ENCODE measurements at regions of chr3 and their contacts with region 1.

Region 1: DNA sequence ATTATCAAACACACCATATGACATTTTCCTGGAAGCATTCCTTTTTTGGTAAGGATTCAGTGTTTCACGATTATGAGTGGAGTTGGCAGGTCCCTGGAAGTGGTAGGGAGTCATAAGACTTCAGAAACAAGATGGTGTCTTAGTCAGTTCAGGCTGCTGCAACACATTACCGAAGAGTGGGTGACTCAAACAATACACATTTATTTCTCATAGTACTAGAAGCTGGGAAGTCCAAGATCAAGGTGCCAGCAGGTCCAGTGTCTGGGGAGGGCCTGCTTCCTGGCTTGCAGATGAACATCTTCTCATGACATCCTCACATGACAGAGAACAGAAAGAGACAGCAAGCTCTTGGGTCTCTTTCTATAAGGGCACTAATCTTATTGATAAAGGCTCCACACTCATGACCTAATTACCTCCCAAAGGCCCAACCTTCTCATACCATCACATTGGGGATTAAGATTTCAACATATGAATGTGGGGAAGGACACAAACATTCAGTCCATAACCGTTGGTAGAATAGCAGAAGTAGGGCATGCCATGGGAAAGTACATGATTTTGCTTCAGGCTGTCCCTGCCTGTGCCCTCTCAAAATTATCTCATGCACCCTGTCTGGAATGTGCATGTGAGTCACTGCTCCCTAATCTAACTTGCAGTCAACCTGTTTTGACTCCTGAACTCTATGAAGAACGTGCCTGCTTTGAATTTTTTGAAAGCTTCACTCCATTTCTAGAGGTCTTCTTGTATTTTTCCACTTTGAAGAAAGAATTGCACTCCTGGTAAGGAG is 72.5 kb downstream of the GTPBP8 start:
- DNase-seq: no peak
- H3K4me3 ChIP-seq: no peak overlapping the region
- H3K27ac ChIP-seq: peak overlapping the region in 1 of 2 donors; percentile 17
- H3K4me1 ChIP-seq: peaks cover 2% of the 10 kb centered on the region
- H3K27me3 ChIP-seq: no peaks in the 10 kb centered on the region
- CTCF ChIP-seq: no peak
- EP300 ChIP-seq: no peak
- POLR2A ChIP-seq: no peak

Region 2: DNA sequence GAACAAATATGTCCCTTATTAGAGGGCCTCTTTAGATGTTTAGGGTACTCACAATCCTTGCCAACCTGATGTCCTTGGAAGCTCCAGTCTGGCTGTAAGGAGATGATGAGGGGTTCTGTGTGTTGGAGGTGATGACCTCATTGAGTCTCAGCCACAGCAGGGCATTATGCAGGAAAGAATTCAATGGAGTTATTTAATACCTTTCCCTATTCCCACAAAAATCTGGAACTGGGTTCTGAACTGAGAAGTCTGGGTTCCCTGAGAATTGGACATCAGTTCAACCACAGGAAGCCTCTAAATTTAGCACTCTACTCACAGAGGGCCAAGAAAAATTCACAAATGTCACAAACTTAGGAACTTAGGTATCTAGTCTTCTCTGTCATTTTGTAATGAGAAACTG is 464.6 kb before region 1 on chr3:
- intact Hi-C with region 1: no loop called
- DNase-seq: no peak
- H3K4me3 ChIP-seq: no peak overlapping the region
- H3K27ac ChIP-seq: no peak overlapping the region
- H3K4me1 ChIP-seq: no peaks in the 10 kb centered on the region
- H3K27me3 ChIP-seq: no peaks in the 10 kb centered on the region
- CTCF ChIP-seq: no peak
- EP300 ChIP-seq: no peak
- POLR2A ChIP-seq: no peak

Region 3: DNA sequence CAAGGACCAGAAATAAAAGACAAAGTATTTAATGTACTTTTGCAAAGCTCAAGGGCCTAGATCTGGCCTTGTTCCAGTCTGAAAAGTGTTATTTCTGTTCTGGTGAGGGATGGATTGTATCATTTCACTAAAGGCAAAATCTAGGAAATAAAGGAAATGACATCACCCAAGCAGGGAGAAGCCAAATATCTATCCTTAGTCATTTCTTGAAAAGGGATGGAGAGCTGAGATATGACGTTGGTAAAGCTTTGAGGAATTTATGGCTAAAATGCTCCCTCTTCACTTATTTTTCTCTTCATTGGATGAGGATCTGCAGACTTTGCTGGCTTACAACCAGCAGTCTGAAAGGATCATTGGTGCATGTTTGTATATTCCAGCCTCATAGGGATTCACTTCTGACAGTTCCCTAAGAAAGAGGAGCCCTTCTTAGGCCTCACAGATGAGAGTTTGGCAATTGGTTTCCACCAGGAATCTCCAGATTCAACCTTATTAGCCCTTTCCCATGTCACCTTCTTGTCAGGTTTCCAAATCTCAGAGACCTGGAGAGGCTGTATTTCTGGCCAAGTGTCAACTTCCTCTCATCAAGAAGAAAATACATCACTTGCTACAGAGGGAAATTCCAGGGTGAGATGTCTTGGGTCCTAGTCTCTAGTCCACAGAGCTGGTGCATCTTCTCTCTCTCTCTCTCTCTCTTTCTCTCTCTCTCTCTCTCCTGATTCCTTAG is 54.4 kb after region 1 on chr3:
- intact Hi-C with region 1: loop called in 2 of 4 experiments (anchors 10 kb)
- DNase-seq: no peak
- H3K4me3 ChIP-seq: no peak overlapping the region
- H3K27ac ChIP-seq: no peak overlapping the region
- H3K4me1 ChIP-seq: peaks cover 4% of the 10 kb centered on the region
- H3K27me3 ChIP-seq: no peaks in the 10 kb centered on the region
- CTCF ChIP-seq: no peak
- EP300 ChIP-seq: no peak
- POLR2A ChIP-seq: no peak

Region 4: DNA sequence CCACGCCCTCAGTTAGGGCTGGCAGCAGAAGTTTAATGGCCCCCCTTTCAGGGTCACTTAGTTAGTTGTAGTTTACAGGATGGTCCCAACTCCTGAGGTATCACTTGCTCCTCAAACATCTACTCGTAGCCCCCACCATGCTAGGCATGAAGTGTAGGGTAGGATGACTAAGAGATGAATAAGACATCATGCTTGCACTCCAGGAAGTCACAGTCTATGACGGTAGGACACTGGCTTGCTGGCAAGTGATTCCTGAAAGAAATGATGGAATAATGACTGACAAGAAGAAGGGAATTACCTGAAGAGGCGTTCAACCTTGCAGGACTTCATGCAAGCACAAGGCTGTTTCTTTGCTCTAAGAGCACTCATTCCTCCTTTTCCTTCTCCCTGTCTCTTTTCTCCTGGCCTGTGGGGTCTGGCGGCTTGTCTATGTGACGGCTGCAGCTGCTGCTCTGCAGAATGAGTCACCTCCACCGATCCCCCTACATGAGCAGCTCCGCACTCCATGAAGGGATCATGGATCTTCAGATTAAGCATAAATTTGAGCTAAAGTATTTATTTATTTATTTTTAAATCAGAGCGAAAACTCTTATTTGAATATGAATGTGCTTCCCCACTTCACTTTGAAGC is 65.2 kb after region 1 on chr3:
- intact Hi-C with region 1: loop called in 2 of 4 experiments (anchors 10 kb)
- DNase-seq: no peak
- H3K4me3 ChIP-seq: no peak overlapping the region
- H3K27ac ChIP-seq: no peak overlapping the region
- H3K4me1 ChIP-seq: no peaks in the 10 kb centered on the region
- H3K27me3 ChIP-seq: no peaks in the 10 kb centered on the region
- CTCF ChIP-seq: no peak
- EP300 ChIP-seq: no peak
- POLR2A ChIP-seq: no peak

Measured in ovary (tissue), 10 donors.